Activated CD4-positive, alpha-beta T cell treated with anti-CD3 and anti-CD28 coated beads, Interleukin-2, amount 10 ng/mL, durations not matched to agents 7 days and 5 days (primary cell): ENCODE measurements at regions of chr17 and their contacts with region 1.

Region 1: GRCh38 chr17:56737366-56738161 is 96.2 kb downstream of the C17orf67 start:
- DNase-seq: no peak
- H3K4me3 Mint-ChIP-seq: no peak overlapping the region
- H3K27ac Mint-ChIP-seq: no peak overlapping the region
- H3K4me1 Mint-ChIP-seq: no peaks in the 10 kb centered on the region
- H3K27me3 Mint-ChIP-seq: peaks cover 9% of the 10 kb centered on the region

Region 2: DNA sequence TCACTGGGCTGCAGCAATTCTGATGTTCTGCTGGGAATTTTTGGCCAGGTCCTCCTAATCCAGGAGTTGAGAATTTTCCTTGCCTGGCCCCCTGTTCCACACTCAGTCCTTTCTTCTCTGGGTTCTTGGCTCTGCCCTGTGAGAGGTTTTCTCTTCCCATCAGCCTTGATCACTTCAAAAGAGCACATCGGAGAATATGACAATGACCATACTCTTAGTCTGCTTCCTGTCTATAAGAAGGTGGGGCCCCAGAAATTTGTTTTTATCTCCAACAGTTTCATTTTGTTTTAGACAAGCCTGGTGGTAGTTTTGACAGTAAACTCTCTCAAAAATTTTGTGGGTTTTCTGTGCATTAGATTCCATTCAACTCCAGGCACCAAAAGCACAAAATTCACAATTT is 25.4 kb after region 1 on chr17:
- CTCF ChIA-PET with region 1: no interaction called
- POLR2A ChIA-PET with region 1: interaction called, 12 read pairs
- DNase-seq: peak; percentile 29
- H3K4me3 Mint-ChIP-seq: peak overlapping the region; percentile 8
- H3K27ac Mint-ChIP-seq: peak overlapping the region; percentile 86
- H3K4me1 Mint-ChIP-seq: peaks cover 22% of the 10 kb centered on the region
- H3K27me3 Mint-ChIP-seq: no peaks in the 10 kb centered on the region